HEK293T (cell line): ENCODE measurements at regions of chr11 and their contacts with region 1.

Region 1: GRCh38 chr11:94183886-94184264 is 55.2 kb downstream of the PANX1 start:
- DNase-seq: peak; percentile 77

Region 2: GRCh38 chr11:94171693-94172440 is 12.0 kb before region 1 on chr11:
- CTCF ChIA-PET with region 1: interaction called, 12 read pairs
- POLR2A ChIA-PET with region 1: interaction called, 3 read pairs
- DNase-seq: peak; percentile 63